Naive thymus-derived CD4-positive, alpha-beta T cell (primary cell): ENCODE measurements at regions of chr10 and their contacts with region 1.

Region 1: DNA sequence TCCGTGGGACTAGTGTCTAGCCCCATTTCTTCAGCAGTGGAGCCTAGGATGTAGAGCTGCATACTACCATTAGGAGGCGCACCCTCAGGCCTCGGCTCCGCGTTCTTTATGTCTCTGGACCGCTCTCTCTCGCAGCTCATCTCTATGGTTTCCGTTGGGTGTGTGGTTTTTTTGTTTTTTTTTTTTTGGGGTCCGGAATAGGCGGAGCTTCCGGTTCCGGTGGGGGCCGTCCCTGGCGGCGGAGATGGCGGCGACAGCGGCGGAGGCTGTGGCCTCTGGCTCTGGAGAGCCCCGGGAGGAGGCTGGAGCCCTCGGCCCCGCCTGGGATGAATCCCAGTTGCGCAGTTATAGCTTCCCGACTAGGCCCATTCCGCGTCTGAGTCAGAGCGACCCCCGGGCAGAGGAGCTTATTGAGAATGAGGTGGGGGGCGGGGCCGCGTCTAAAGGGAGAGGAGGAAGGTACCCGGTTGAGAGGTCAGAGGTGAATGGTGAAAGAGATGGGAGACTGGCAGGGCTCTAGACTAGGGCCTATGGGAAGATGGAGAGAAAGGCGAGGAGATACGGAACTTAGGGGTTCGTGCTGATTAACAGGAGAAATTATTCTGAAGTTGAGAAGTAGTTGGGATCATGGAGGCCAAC is at the start of gene HIF1AN:
- DNase-seq: peak; percentile 70 to 95 (median 91)
- ATAC-seq: peak; percentile 100
- H3K4me3 ChIP-seq: peak within 1 kb of the TSS; percentile 73
- H3K4me3 Mint-ChIP-seq: peak within 1 kb of the TSS in 1 of 10 donors; percentile 9
- H3K27ac ChIP-seq: peak within 1 kb of the TSS; percentile 85
- H3K27ac Mint-ChIP-seq: peak within 1 kb of the TSS in 1 of 9 donors; percentile 57
- H3K4me1 ChIP-seq: peaks cover 24 to 27% of the 10 kb centered on the region in 2 donors
- H3K4me1 Mint-ChIP-seq: peaks cover 0 to 29% (median 10%) of the 10 kb centered on the region in 7 donors
- H3K27me3 ChIP-seq: no peaks in the 10 kb centered on the region
- H3K27me3 Mint-ChIP-seq: no peaks in the 10 kb centered on the region
- total RNA-seq, gene HIF1AN: 43.3 to 74.9 (median 54.8) TPM

Region 2: DNA sequence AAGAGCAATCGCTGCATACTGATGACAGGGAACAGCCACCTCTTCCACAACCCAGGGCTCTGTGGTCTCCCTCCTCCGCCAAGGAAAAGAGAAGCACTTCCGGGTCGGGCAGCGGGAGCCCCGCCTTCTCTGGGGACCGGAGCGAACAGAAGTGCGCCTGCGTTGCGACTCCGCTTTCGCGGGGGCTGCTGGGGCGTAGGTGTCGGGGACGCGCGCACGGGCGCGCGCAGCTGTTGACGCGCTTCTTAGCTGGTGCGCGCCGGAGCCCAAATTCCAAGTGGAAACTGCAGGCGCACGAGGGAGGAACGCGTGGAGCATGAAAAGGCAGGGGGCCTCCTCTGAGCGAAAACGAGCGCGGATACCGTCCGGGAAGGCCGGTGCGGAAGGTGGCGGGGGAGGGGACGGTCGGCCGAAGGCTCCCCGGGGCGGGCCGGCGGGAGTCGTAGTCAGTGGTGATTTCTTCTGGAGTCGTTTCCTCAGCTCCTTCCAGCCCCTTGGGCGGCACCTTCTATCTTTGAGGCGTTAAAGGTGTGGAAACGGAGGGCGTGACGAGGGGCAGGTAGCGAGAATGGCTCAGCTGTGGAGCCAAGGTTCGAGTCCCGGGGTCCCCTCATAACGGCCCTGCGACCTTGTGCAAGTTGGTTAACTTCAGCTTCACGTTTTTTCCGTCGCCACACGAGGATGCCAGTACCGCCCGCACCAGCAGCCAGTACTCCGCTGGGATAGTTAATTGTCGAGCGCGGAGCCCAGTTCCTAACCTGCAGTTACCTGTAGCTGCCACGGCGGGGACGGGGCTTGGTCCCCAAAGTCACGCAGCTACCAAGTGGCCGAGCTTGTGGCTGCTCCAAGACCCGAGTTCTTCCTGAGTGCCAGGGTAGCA is 803.6 kb before region 1 on chr10 and contains the starts of genes COX15 and CUTC:
- CTCF ChIA-PET with region 1: no interaction called
- POLR2A ChIA-PET with region 1: no interaction called
- intact Hi-C with region 1: loop called (anchors 1 to 5 kb)
- DNase-seq: peak; percentile 89 to 95 (median 94)
- ATAC-seq: peak; percentile 95
- H3K4me3 ChIP-seq: peak within 1 kb of the TSS; percentile 94
- H3K4me3 Mint-ChIP-seq: peak within 1 kb of the TSS; percentile 95 to 100 (median 98)
- H3K27ac ChIP-seq: peak within 1 kb of the TSS; percentile 83
- H3K27ac Mint-ChIP-seq: peak within 1 kb of the TSS; percentile 98 to 100 (median 99)
- H3K4me1 ChIP-seq: peaks cover 11 to 19% of the 10 kb centered on the region in 2 donors
- H3K4me1 Mint-ChIP-seq: peaks cover 28 to 79% (median 52%) of the 10 kb centered on the region in 7 donors
- H3K27me3 ChIP-seq: no peaks in the 10 kb centered on the region
- H3K27me3 Mint-ChIP-seq: no peaks in the 10 kb centered on the region
- total RNA-seq, gene COX15: 17.6 to 43.5 (median 32.9) TPM
- total RNA-seq, gene CUTC: 19.3 to 37.1 (median 25.0) TPM

Region 3: DNA sequence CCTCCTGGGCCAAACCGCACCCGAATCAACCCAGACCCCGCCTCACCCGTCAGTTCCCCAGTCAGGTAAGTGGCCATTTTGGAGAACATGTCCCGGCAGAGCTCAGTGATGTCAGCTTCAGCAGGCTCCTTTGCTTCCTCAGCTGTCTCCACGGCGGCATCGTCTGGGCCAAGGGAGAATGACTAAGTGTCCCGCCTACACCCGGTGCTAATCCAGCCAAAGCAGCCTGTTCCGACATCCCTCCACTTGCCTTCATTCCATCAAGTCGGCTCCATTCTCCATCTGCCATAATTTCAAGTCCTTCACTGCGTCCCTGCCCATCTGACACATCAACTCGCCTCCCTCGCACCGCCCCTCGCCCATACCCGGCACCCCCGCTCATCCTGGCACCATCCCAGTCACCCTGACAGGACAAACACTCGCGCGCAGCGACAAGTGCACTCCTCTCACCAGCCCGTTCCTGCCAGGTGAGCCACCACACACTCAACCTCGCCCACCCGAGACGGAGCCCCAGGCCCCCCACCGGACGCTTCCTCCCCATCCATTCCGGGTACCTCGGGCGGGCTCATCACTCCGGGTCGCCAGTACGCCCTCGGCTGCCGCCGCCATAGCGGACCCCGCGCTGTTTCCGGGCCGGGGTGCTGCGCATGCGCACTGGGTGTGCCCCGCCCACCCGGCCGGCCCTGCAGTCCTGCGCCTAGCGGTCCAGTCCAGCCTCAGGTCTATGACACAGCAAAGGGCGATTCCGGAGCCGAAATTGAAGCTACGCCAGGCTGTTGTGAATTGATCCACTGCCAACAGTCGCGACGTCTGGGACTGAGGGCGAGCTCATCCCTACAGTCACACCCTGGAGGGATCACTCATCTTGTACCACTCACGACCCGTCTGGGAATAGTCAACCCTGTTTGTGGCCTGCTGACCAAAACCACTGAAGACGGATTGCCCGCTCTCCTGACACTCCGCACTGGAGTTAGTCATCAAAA is 249.5 kb before region 1 on chr10 and contains the start of gene BLOC1S2:
- CTCF ChIA-PET with region 1: no interaction called
- POLR2A ChIA-PET with region 1: interaction called, 4 read pairs
- intact Hi-C with region 1: loop called in 1 of 2 experiments (anchors 5 kb)
- DNase-seq: peak; percentile 71 to 97 (median 86)
- ATAC-seq: peak; percentile 92
- H3K4me3 ChIP-seq: peak within 1 kb of the TSS; percentile 99
- H3K4me3 Mint-ChIP-seq: peak within 1 kb of the TSS; percentile 95 to 100 (median 100)
- H3K27ac ChIP-seq: peak within 1 kb of the TSS; percentile 86
- H3K27ac Mint-ChIP-seq: peak within 1 kb of the TSS; percentile 94 to 100 (median 99)
- H3K4me1 ChIP-seq: peaks cover 10 to 17% of the 10 kb centered on the region in 2 donors
- H3K4me1 Mint-ChIP-seq: peaks cover 14 to 32% (median 26%) of the 10 kb centered on the region in 7 donors
- H3K27me3 ChIP-seq: no peaks in the 10 kb centered on the region
- H3K27me3 Mint-ChIP-seq: no peaks in the 10 kb centered on the region
- total RNA-seq, gene BLOC1S2: 31.5 to 51.3 (median 39.9) TPM

Region 4: DNA sequence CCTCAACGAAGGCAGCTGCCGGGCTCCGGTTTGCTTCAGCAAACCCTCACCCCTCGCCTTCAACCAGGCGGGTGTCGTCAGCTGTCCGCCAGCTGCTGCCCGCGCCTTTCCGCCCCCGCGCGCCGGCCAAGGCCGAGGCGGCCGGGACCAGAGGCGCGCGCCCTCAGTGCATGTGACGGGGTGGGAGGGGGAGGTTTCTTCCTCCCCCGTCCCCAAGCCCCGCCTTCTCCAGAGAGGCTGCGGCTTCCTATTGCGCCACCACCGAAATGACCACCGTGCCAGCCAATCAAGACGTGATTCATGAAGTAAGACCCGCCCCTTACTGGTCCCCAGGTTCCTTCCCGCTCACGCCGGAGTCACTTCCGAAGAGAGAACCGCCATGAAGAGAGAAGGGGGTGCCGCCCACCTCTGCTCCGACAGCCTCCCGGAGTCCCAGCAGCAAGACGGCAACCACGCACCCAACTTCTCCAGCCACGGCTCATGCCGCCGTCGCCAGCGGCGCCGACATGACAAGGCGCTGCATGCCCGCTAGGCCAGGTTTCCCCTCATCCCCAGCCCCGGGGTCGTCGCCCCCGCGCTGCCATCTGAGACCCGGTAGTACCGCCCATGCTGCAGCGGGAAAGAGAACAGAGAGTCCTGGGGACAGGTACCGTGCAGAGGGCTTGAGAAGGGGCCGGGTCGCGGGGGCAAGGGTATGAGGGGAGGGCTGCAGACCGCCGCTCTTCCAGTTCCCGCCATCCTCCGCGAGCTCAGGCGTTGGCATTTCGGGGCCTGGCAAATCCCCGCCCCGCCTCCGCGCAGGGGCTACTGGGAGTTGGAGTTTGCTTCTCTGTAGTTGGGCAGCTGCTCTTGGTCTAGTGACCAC is 377.0 kb after region 1 on chr10 and contains the start of gene SLF2:
- CTCF ChIA-PET with region 1: no interaction called
- POLR2A ChIA-PET with region 1: no interaction called
- intact Hi-C with region 1: loop called (anchors 1 kb)
- DNase-seq: peak; percentile 69 to 91 (median 88)
- ATAC-seq: peak; percentile 96
- H3K4me3 ChIP-seq: peak within 1 kb of the TSS; percentile 96
- H3K4me3 Mint-ChIP-seq: peak within 1 kb of the TSS; percentile 91 to 100 (median 99)
- H3K27ac ChIP-seq: peak within 1 kb of the TSS; percentile 89
- H3K27ac Mint-ChIP-seq: peak within 1 kb of the TSS; percentile 88 to 99 (median 97)
- H3K4me1 ChIP-seq: peaks cover 12 to 13% of the 10 kb centered on the region in 2 donors
- H3K4me1 Mint-ChIP-seq: peaks cover 22 to 63% (median 60%) of the 10 kb centered on the region in 7 donors
- H3K27me3 ChIP-seq: no peaks in the 10 kb centered on the region
- H3K27me3 Mint-ChIP-seq: no peaks in the 10 kb centered on the region
- total RNA-seq, gene SLF2: 20.1 to 43.7 (median 38.8) TPM

Region 5: GRCh38 chr10:101060036-101060950 is 524.5 kb after region 1 on chr10:
- CTCF ChIA-PET with region 1: no interaction called
- POLR2A ChIA-PET with region 1: no interaction called
- intact Hi-C with region 1: loop called in 1 of 2 experiments (anchors 2 kb)
- DNase-seq: peak; percentile 70 to 97 (median 94)
- ATAC-seq: peak; percentile 82
- H3K4me3 ChIP-seq: peak overlapping the region; percentile 96
- H3K4me3 Mint-ChIP-seq: peak overlapping the region; percentile 90 to 99 (median 96)
- H3K27ac ChIP-seq: peak overlapping the region; percentile 96
- H3K27ac Mint-ChIP-seq: peak overlapping the region; percentile 86 to 98 (median 93)
- H3K4me1 ChIP-seq: peaks cover 12 to 21% of the 10 kb centered on the region in 2 donors
- H3K4me1 Mint-ChIP-seq: peaks cover 16 to 61% (median 31%) of the 10 kb centered on the region in 7 donors
- H3K27me3 ChIP-seq: peaks cover 5 to 18% of the 10 kb centered on the region in 2 donors
- H3K27me3 Mint-ChIP-seq: peaks cover 15 to 23% (median 18%) of the 10 kb centered on the region in 5 donors